SK-N-SH (cell line): ENCODE measurements at regions of chr6 and their contacts with region 1.

Region 1: GRCh38 chr6:122730775-122731386 is 48.6 kb upstream of the FABP7 start:
- DNase-seq: peak; percentile 20
- H3K4me3 ChIP-seq: no peak overlapping the region; a peak in 1 of 4 replicates
- H3K27ac ChIP-seq: no peak overlapping the region
- H3K4me1 ChIP-seq: peaks cover 0 to under 1% of the 10 kb centered on the region in 2 experiments; a peak in 1 of 4 replicates
- H3K27me3 ChIP-seq: peaks cover 48% of the 10 kb centered on the region
- CTCF ChIP-seq: peak; percentile 83
- EP300 ChIP-seq: no peak
- RAD21 ChIP-seq: peak; percentile 83

Region 2: GRCh38 chr6:122704079-122704478 is 26.8 kb before region 1 on chr6:
- CTCF ChIA-PET with region 1: no interaction called
- POLR2A ChIA-PET with region 1: no interaction called
- DNase-seq: no peak
- H3K4me3 ChIP-seq: no peak overlapping the region
- H3K27ac ChIP-seq: no peak overlapping the region
- H3K4me1 ChIP-seq: no peaks in the 10 kb centered on the region
- H3K27me3 ChIP-seq: no peaks in the 10 kb centered on the region; the same call in 1 of the 2 replicates
- CTCF ChIP-seq: no peak
- EP300 ChIP-seq: no peak
- RAD21 ChIP-seq: no peak

Region 3: GRCh38 chr6:122717350-122717749 is 13.5 kb before region 1 on chr6:
- CTCF ChIA-PET with region 1: interaction called, 12 read pairs
- POLR2A ChIA-PET with region 1: no interaction called
- DNase-seq: no peak
- H3K4me3 ChIP-seq: no peak overlapping the region
- H3K27ac ChIP-seq: no peak overlapping the region
- H3K4me1 ChIP-seq: peaks cover 0 to 3% of the 10 kb centered on the region in 2 experiments; a peak in 1 of 4 replicates
- H3K27me3 ChIP-seq: peaks cover 13% of the 10 kb centered on the region; the same call in 1 of the 2 replicates
- CTCF ChIP-seq: no peak
- EP300 ChIP-seq: no peak
- RAD21 ChIP-seq: no peak

Region 4: GRCh38 chr6:122740936-122741335 is 10.1 kb after region 1 on chr6:
- CTCF ChIA-PET with region 1: interaction called, 20 read pairs
- POLR2A ChIA-PET with region 1: no interaction called
- DNase-seq: no peak
- H3K4me3 ChIP-seq: no peak overlapping the region
- H3K27ac ChIP-seq: no peak overlapping the region
- H3K4me1 ChIP-seq: peaks cover 0 to 5% of the 10 kb centered on the region in 2 experiments; a peak in 1 of 4 replicates
- H3K27me3 ChIP-seq: peaks cover 17% of the 10 kb centered on the region; the same call in 1 of the 2 replicates
- CTCF ChIP-seq: no peak
- EP300 ChIP-seq: no peak
- RAD21 ChIP-seq: no peak

Region 5: DNA sequence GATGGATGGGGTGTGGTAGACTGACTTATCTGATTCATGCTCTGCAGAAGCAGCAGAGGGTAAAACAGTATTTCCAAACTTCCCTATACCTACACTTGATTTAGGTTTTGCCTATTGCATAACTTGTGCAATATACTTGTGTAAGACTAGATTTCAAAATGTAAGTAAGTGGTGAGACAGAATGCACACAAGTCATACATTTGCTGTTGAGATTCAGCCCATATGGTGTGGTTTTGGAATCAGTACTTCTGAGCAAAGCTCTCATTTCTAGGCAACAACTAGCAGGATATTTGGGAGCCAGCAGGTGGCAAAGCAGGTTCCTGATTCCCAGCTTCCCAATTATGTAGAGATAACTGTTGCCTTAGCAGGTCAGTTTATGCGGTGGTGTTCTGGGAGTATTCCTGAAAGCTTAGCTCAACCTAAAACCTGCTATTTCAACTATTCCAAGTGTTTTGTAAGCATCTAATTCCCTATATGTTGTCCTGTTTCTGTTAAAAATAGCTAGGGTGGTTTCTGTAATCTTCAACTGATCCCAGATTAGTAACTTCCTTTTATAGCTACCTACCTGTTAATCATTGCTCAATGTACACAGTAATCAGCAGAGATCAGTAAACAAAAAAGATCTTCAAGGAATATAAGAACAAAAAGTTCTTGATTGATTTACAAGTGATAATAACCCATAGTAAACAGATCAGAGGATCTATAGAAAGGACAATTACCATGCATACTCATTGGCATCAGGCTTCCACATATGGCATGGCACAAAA is 40.1 kb after region 1 on chr6:
- CTCF ChIA-PET with region 1: no interaction called
- POLR2A ChIA-PET with region 1: no interaction called
- DNase-seq: no peak
- H3K4me3 ChIP-seq: no peak overlapping the region
- H3K27ac ChIP-seq: no peak overlapping the region
- H3K4me1 ChIP-seq: no peaks in the 10 kb centered on the region
- H3K27me3 ChIP-seq: peaks cover 5% of the 10 kb centered on the region; the same call in 1 of the 2 replicates
- CTCF ChIP-seq: no peak
- EP300 ChIP-seq: no peak
- RAD21 ChIP-seq: no peak

Region 6: DNA sequence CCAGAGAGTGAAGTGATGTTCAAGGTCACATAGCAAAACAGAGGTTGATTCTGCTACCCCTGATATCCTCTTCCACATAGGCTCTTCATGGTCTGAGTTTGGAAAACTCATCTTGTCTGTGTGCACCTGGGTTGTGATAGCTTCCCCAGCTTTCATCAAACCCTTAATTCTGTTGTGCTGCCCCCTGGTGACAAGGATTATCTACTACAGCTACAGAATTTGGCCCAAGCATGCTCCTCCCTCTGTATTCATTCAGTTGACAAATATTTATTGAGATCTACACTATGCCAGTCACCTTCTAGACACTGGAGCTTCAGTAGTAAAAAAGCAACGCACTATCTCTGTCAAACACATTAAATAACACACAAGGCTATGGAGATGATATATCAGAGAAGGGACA is 108.6 kb after region 1 on chr6:
- CTCF ChIA-PET with region 1: interaction called, 47 read pairs
- POLR2A ChIA-PET with region 1: interaction called, 3 read pairs
- DNase-seq: peak; percentile 62
- H3K4me3 ChIP-seq: no peak overlapping the region
- H3K27ac ChIP-seq: no peak overlapping the region
- H3K4me1 ChIP-seq: peaks cover 0 to 4% of the 10 kb centered on the region in 2 experiments; a peak in 1 of 4 replicates
- H3K27me3 ChIP-seq: peaks cover 23% of the 10 kb centered on the region
- CTCF ChIP-seq: peak; percentile 67
- EP300 ChIP-seq: no peak
- RAD21 ChIP-seq: peak; percentile 62

Region 7: DNA sequence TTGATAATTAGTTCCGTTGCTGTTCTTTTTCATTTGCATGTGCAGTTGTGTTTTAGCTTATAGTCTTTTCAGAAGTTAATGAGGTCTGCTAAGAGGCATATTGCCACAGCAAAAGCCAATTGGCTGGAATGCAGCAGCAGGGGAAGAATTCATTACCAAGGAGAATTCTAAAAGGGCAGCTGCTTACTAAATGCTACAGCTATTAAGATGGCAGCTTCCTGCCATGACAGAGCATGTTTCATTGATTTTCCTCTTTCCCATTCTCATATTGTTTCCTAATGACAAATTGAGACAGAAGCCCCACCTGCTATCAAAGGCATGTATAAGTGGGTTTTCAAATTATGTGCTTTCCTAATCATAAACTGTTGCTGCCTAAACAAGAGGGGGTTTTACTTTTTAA is 331.8 kb after region 1 on chr6:
- CTCF ChIA-PET with region 1: no interaction called
- POLR2A ChIA-PET with region 1: no interaction called
- DNase-seq: no peak
- H3K4me3 ChIP-seq: no peak overlapping the region
- H3K27ac ChIP-seq: no peak overlapping the region
- H3K4me1 ChIP-seq: no peaks in the 10 kb centered on the region; a peak in 1 of 4 replicates
- H3K27me3 ChIP-seq: no peaks in the 10 kb centered on the region
- CTCF ChIP-seq: no peak
- EP300 ChIP-seq: no peak
- RAD21 ChIP-seq: no peak